PC-3 (cell line): ENCODE measurements at regions of chr1 and their contacts with region 1.

Region 1: GRCh38 chr1:244047621-244048471 is 3.2 kb upstream of the ZBTB18 start:
- DNase-seq: peak; percentile 99
- ATAC-seq: peak; percentile 90
- H3K4me3 ChIP-seq: peak overlapping the region; percentile 98
- H3K27ac ChIP-seq: peak overlapping the region; percentile 62
- H3K4me1 ChIP-seq: peaks cover 24% of the 10 kb centered on the region
- H3K27me3 ChIP-seq: 0 out of 2 replicates have a peak, but pooled peaks cover 6% of the 10 kb centered on the region
- CTCF ChIP-seq: no peak

Region 2: DNA sequence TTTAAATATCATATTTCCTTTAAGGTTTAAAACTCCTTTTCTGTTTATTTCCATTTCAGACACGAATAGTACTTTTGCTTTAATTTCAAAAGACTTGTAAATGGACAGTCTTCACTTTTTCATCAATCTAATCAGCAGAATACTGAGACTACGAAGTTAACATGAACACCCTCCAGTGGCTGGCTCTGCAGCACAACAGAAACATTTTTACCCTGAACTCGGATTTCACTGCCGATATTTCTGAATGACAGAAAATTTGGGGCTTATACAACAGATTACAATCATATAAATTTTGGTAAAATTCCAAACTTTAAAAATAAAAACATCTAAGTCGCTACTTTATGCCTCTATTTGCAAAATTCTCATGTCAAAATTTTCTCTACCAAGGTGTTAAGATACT is 284.0 kb before region 1 on chr1:
- CTCF ChIA-PET with region 1: no interaction called
- POLR2A ChIA-PET with region 1: no interaction called
- intact Hi-C with region 1: no loop called
- DNase-seq: no peak
- ATAC-seq: no peak
- H3K4me3 ChIP-seq: no peak overlapping the region
- H3K27ac ChIP-seq: no peak overlapping the region
- H3K4me1 ChIP-seq: no peaks in the 10 kb centered on the region
- H3K27me3 ChIP-seq: no peaks in the 10 kb centered on the region
- CTCF ChIP-seq: no peak

Region 3: DNA sequence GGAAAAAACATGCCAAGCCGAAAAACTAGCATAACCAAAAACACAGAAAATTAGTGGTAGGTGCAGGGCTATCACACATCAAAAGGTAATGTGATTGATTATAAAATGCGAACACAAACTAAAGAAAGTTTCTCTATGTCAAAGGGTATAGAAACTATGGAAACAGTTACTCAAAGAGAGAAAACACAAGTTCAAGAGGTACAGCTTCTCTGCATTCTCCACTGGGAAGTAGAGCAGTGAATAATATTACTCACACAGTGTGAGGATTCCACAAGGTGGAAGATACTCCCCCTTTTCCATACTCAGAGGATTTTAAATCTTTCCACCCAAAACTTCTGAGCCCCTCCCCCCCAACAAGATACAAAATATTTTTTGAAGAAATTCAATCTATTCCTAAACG is 216.4 kb before region 1 on chr1:
- CTCF ChIA-PET with region 1: interaction called, 13 read pairs
- POLR2A ChIA-PET with region 1: no interaction called
- intact Hi-C with region 1: no loop called
- DNase-seq: no peak
- ATAC-seq: no peak
- H3K4me3 ChIP-seq: no peak overlapping the region
- H3K27ac ChIP-seq: no peak overlapping the region
- H3K4me1 ChIP-seq: no peaks in the 10 kb centered on the region
- H3K27me3 ChIP-seq: no peaks in the 10 kb centered on the region
- CTCF ChIP-seq: no peak

Region 4: GRCh38 chr1:243917177-243917862 is 130.5 kb before region 1 on chr1:
- CTCF ChIA-PET with region 1: no interaction called
- POLR2A ChIA-PET with region 1: no interaction called
- intact Hi-C with region 1: loop called (anchors 2 kb)
- DNase-seq: peak; percentile 93
- ATAC-seq: peak; percentile 83
- H3K4me3 ChIP-seq: peak overlapping the region; percentile 70
- H3K27ac ChIP-seq: peak overlapping the region; percentile 43
- H3K4me1 ChIP-seq: peaks cover 29% of the 10 kb centered on the region
- H3K27me3 ChIP-seq: no peaks in the 10 kb centered on the region
- CTCF ChIP-seq: peak; percentile 31; the same call in 1 of the 2 replicates

Region 5: DNA sequence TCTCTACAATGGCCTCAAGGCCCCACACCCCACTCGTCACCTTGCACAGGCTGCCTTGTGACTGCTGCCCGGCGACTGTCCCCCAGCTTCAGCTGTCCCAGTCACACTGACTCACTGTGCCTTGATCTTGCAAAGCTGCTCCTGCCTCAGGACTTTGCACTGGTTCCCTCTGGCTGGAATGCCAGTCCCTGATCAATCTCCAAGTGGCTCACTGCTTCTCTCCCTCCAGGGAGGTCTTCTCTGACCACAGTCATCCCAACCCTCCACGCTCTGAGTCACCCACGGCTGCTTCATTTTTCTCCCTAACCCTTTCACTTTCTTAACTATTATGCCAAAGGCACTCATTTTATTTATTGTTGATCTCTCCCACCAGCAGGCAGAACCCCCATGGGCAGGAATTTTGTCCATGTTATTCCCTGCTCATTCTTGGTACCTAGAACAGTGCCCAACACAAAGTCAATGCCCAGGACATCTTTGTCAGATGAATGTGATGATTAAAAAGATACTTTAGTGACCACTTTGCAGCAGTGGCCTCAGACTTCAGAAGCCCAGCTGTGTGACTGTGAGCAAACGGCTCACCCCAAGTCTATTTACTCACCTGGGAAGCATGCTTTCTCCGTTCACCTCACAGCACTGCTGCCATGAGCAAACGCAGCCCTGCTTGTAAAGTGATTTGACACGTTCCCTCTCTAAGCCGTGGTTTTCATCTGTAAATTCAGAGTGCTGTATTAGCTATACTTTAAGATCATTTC is 56.6 kb after region 1 on chr1:
- CTCF ChIA-PET with region 1: no interaction called
- POLR2A ChIA-PET with region 1: no interaction called
- intact Hi-C with region 1: loop called (anchors 10 kb)
- DNase-seq: peak; percentile 84
- ATAC-seq: peak; percentile 94
- H3K4me3 ChIP-seq: peak overlapping the region; percentile 31; the same call in 1 of the 2 replicates
- H3K27ac ChIP-seq: peak overlapping the region; percentile 6; the same call in 1 of the 2 replicates
- H3K4me1 ChIP-seq: peaks cover 10% of the 10 kb centered on the region
- H3K27me3 ChIP-seq: no peaks in the 10 kb centered on the region
- CTCF ChIP-seq: no peak

Region 6: GRCh38 chr1:244231572-244232315 is 183.9 kb after region 1 on chr1:
- CTCF ChIA-PET with region 1: no interaction called
- POLR2A ChIA-PET with region 1: no interaction called
- intact Hi-C with region 1: loop called (anchors 5 kb)
- DNase-seq: peak; percentile 79
- ATAC-seq: peak; percentile 76
- H3K4me3 ChIP-seq: peak overlapping the region; percentile 68
- H3K27ac ChIP-seq: peak overlapping the region; percentile 68
- H3K4me1 ChIP-seq: peaks cover 26% of the 10 kb centered on the region
- H3K27me3 ChIP-seq: no peaks in the 10 kb centered on the region
- CTCF ChIP-seq: no peak

Region 7: DNA sequence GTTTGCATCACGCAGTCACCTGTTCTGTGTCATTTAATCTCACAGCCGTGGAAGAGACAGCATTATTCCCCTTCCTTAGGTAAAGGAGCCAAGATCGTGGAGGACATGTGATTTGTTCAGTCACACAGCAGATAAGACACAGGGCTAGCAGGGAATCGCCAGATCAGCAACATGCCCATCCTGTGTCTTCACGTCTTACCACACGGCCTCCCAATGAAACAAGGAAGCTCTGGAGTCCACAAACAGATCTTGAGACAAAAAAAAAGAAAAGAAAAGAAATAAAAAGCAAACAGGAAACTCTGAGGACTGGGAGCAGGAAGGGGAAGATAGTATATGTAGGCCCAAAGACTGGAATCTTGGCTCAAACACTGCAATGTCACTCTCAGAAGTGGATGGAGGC is 248.6 kb after region 1 on chr1:
- CTCF ChIA-PET with region 1: no interaction called
- POLR2A ChIA-PET with region 1: no interaction called
- intact Hi-C with region 1: no loop called
- DNase-seq: no peak
- ATAC-seq: no peak
- H3K4me3 ChIP-seq: no peak overlapping the region
- H3K27ac ChIP-seq: no peak overlapping the region
- H3K4me1 ChIP-seq: peaks cover 3% of the 10 kb centered on the region; the same call in 1 of the 2 replicates
- H3K27me3 ChIP-seq: no peaks in the 10 kb centered on the region
- CTCF ChIP-seq: no peak

Region 8: GRCh38 chr1:244336232-244336899 is 288.5 kb after region 1 on chr1:
- CTCF ChIA-PET with region 1: no interaction called
- POLR2A ChIA-PET with region 1: no interaction called
- intact Hi-C with region 1: no loop called
- DNase-seq: no peak
- ATAC-seq: no peak
- H3K4me3 ChIP-seq: no peak overlapping the region
- H3K27ac ChIP-seq: no peak overlapping the region
- H3K4me1 ChIP-seq: peaks cover 5% of the 10 kb centered on the region
- H3K27me3 ChIP-seq: no peaks in the 10 kb centered on the region
- CTCF ChIP-seq: no peak